Naive thymus-derived CD4-positive, alpha-beta T cell (primary cell): ENCODE measurements at regions of chr22 and their contacts with region 1.

Region 1: GRCh38 chr22:37267135-37267587 is 15.1 kb upstream of the CYTH4 start:
- DNase-seq: peak; percentile 58 to 84 (median 73)
- ATAC-seq: peak; percentile 92
- H3K4me3 ChIP-seq: peak overlapping the region; percentile 76
- H3K4me3 Mint-ChIP-seq: peak overlapping the region; percentile 84 to 93 (median 88)
- H3K27ac ChIP-seq: peak overlapping the region; percentile 87
- H3K27ac Mint-ChIP-seq: peak overlapping the region; percentile 91 to 99 (median 95)
- H3K4me1 ChIP-seq: peaks cover 0 to 13% of the 10 kb centered on the region in 2 donors
- H3K4me1 Mint-ChIP-seq: peaks cover 30 to 48% (median 38%) of the 10 kb centered on the region in 7 donors
- H3K27me3 ChIP-seq: no peaks in the 10 kb centered on the region
- H3K27me3 Mint-ChIP-seq: peaks cover 0 to 14% (median 0%) of the 10 kb centered on the region in 5 donors

Region 2: DNA sequence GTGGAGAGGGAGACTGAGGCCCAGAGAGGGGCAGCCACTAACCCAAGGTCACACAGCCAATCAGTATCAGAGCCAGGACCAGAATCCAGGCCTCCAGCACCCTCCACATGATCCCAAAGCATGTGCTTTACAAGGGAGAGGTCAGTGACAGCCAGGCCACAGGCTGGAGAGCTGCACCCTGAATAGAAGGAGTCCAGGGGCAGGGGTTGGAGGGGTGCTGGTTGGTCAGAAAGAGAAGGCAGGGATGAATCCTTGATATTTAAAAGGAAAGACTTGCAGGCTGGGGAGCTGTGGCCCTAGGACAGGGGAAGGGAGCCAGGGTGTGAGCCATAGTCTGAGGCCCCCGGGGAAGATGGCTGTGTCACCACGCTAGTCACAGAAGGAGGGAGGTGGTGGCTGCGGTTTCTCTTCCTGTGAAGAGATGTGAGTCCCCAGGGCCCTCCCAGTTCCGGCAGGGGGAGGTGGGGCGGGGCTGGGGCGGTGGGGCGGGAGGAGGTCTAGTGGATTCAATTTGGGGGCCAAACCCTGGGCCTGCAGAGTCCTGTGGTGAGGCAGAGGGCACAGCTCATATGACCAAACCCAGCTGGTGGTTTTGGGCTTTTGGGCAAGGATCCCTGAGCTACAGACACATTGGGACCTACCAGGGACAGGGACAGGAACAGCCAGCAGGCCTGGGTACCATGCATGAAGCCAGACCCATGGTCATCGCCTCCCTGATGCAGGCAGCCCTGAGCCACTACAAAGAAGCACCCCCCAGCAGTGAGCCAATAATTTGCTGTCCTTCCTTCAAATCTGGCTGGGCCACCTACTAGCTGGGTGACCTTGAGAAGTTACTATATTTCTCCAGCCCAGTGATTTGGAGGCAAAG is 37.1 kb before region 1 on chr22:
- CTCF ChIA-PET with region 1: interaction called, 26 read pairs
- POLR2A ChIA-PET with region 1: interaction called, 5 read pairs
- intact Hi-C with region 1: loop called in 1 of 2 experiments (anchors 5 kb)
- DNase-seq: peak; percentile 60 to 93 (median 89)
- ATAC-seq: peak; percentile 93
- H3K4me3 ChIP-seq: peak overlapping the region; percentile 54
- H3K4me3 Mint-ChIP-seq: peak overlapping the region; percentile 75 to 99 (median 86)
- H3K27ac ChIP-seq: peak overlapping the region; percentile 90
- H3K27ac Mint-ChIP-seq: peak overlapping the region; percentile 96 to 100 (median 99)
- H3K4me1 ChIP-seq: peaks cover 80 to 92% of the 10 kb centered on the region in 2 donors
- H3K4me1 Mint-ChIP-seq: peaks cover 75 to 92% (median 87%) of the 10 kb centered on the region in 7 donors
- H3K27me3 ChIP-seq: no peaks in the 10 kb centered on the region
- H3K27me3 Mint-ChIP-seq: no peaks in the 10 kb centered on the region

Region 3: GRCh38 chr22:37309211-37310074 is 42.3 kb after region 1 on chr22:
- CTCF ChIA-PET with region 1: interaction called, 34 read pairs
- POLR2A ChIA-PET with region 1: interaction called, 70 read pairs
- intact Hi-C with region 1: loop called in 1 of 2 experiments (anchors 2 kb)
- DNase-seq: peak in 8 of 9 donors; percentile 46 to 72 (median 67)
- ATAC-seq: peak; percentile 49
- H3K4me3 ChIP-seq: peak overlapping the region; percentile 34
- H3K4me3 Mint-ChIP-seq: peak overlapping the region; percentile 75 to 94 (median 84)
- H3K27ac ChIP-seq: peak overlapping the region; percentile 84
- H3K27ac Mint-ChIP-seq: peak overlapping the region; percentile 89 to 100 (median 97)
- H3K4me1 ChIP-seq: peaks cover 61 to 72% of the 10 kb centered on the region in 2 donors
- H3K4me1 Mint-ChIP-seq: peaks cover 63 to 87% (median 83%) of the 10 kb centered on the region in 7 donors
- H3K27me3 ChIP-seq: no peaks in the 10 kb centered on the region
- H3K27me3 Mint-ChIP-seq: no peaks in the 10 kb centered on the region

Region 4: GRCh38 chr22:37428649-37429586 is 161.8 kb after region 1 on chr22:
- CTCF ChIA-PET with region 1: interaction called, 13 read pairs
- POLR2A ChIA-PET with region 1: no interaction called
- intact Hi-C with region 1: loop called (anchors 1 kb)
- DNase-seq: peak; percentile 23 to 64 (median 54)
- ATAC-seq: peak; percentile 69
- H3K4me3 ChIP-seq: no peak overlapping the region
- H3K4me3 Mint-ChIP-seq: peak overlapping the region in 8 of 10 donors; percentile 24 to 79 (median 40)
- H3K27ac ChIP-seq: no peak overlapping the region
- H3K27ac Mint-ChIP-seq: no peak overlapping the region
- H3K4me1 ChIP-seq: peaks cover 5 to 8% of the 10 kb centered on the region in 2 donors
- H3K4me1 Mint-ChIP-seq: peaks cover 0 to 25% (median 0%) of the 10 kb centered on the region in 7 donors
- H3K27me3 ChIP-seq: peaks cover 12 to 14% of the 10 kb centered on the region in 2 donors
- H3K27me3 Mint-ChIP-seq: peaks cover 42 to 62% (median 52%) of the 10 kb centered on the region in 5 donors

Region 5: GRCh38 chr22:37498289-37498909 is 231.2 kb after region 1 on chr22:
- CTCF ChIA-PET with region 1: no interaction called
- POLR2A ChIA-PET with region 1: no interaction called
- intact Hi-C with region 1: loop called in 1 of 2 experiments (anchors 1 kb)
- DNase-seq: peak; percentile 51 to 80 (median 72)
- ATAC-seq: peak; percentile 94
- H3K4me3 ChIP-seq: no peak overlapping the region
- H3K4me3 Mint-ChIP-seq: no peak overlapping the region
- H3K27ac ChIP-seq: no peak overlapping the region
- H3K27ac Mint-ChIP-seq: no peak overlapping the region
- H3K4me1 ChIP-seq: peaks cover 4 to 21% of the 10 kb centered on the region in 2 donors
- H3K4me1 Mint-ChIP-seq: peaks cover 17 to 35% (median 28%) of the 10 kb centered on the region in 7 donors
- H3K27me3 ChIP-seq: no peaks in the 10 kb centered on the region
- H3K27me3 Mint-ChIP-seq: peaks cover 0 to 5% (median 0%) of the 10 kb centered on the region in 5 donors